OCI-LY7 (cell line): ENCODE measurements at regions of chrX and their contacts with region 1.

Region 1: GRCh38 chrX:150683536-150684146 is 9.6 kb upstream of the MTMR1 start:
- DNase-seq: peak; percentile 62
- H3K4me3 ChIP-seq: no peak overlapping the region
- H3K27ac ChIP-seq: no peak overlapping the region
- H3K4me1 ChIP-seq: peaks cover 10% of the 10 kb centered on the region
- CTCF ChIP-seq: peak; percentile 77

Region 2: DNA sequence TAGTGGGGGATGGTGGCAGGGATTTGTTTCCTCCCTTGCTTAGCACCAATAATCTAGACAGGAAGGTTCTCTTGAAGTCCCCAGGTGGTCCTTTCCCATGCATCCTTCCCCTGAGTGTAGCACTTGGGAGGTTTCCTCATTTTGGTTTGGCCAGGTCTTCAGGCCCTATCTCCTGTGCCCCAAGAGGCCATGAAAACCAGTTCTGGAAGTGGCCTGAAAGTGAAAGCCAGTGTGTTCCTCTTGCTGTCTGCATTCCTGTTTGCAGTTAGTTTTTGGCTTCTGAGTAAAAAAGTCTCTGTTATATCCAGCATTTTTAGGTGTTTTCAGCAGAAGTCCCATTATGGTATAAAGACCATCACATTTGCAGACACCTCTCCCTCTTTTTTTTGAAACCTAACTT is 55.7 kb before region 1 on chrX:
- CTCF ChIA-PET with region 1: no interaction called
- POLR2A ChIA-PET with region 1: no interaction called
- intact Hi-C with region 1: no loop called
- DNase-seq: no peak
- H3K4me3 ChIP-seq: no peak overlapping the region
- H3K27ac ChIP-seq: no peak overlapping the region
- H3K4me1 ChIP-seq: no peaks in the 10 kb centered on the region
- CTCF ChIP-seq: no peak

Region 3: DNA sequence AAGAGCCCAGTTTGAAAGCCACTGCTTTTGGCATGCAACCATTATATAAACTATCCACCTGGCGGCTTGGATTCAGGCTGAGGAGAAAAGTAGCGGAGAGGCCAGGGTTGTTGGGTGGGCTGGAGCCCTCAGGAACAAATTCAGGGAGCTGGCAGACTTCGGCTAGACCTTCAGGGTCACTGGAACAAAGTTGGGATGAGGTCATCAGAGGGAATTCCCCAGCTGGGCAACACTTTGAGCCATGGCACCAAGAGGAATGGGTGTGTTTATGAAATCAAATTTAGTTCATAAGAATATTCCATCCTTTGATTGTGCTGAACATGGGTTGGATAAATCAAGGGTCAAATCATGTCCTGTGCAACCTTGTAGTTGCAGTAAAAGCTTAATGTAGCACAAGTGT is 31.5 kb after region 1 on chrX:
- CTCF ChIA-PET with region 1: no interaction called
- POLR2A ChIA-PET with region 1: interaction called, 7 read pairs
- intact Hi-C with region 1: loop called (anchors 1 kb)
- DNase-seq: no peak
- H3K4me3 ChIP-seq: no peak overlapping the region
- H3K27ac ChIP-seq: no peak overlapping the region
- H3K4me1 ChIP-seq: peaks cover 60% of the 10 kb centered on the region
- CTCF ChIP-seq: no peak